Common myeloid progenitor, CD34-positive (primary cell): ENCODE measurements at regions of chr6 and their contacts with region 1.

Region 1: DNA sequence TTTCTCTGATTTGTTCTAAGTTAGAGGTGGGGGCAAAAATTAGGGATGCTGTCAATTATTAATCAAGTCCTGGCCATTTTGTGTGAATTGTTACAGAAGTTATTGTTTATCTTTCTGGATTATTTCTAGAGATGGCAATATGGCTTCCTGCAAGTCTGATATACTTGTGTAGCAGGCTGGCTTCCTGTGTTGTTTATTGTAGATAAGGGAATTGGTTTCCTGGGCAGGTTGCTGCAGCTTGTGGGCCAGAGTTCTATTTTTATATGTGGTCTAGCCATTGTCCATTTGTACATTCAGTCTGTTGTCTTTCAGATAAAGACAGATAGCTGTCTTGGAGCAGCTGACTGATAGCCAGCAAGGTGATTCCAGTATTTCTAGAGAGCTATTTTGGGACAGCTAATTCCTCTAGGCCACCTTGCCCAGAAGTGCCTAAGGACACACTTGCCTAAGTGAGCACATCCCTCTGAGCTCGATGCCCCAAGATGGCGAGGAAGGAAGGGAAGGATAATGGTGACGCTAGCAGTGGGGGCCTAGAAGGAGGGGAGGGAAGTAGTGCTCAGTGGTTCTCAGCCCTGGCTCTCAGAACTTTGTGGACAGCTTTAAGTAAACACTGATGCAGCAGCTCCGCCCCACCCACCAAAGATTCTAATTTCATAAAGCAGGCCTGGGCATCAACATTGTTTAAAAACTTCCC is 25.5 kb downstream of the DDO start:
- DNase-seq: peak; percentile 80 to 97 (median 92)
- H3K4me3 ChIP-seq: peak overlapping the region in 2 of 7 experiments; percentile 16 to 52
- H3K27ac ChIP-seq: no peak overlapping the region
- H3K4me1 ChIP-seq: peaks cover 14 to 17% (median 15%) of the 10 kb centered on the region in 4 experiments
- H3K27me3 ChIP-seq: no peaks in the 10 kb centered on the region

Region 2: DNA sequence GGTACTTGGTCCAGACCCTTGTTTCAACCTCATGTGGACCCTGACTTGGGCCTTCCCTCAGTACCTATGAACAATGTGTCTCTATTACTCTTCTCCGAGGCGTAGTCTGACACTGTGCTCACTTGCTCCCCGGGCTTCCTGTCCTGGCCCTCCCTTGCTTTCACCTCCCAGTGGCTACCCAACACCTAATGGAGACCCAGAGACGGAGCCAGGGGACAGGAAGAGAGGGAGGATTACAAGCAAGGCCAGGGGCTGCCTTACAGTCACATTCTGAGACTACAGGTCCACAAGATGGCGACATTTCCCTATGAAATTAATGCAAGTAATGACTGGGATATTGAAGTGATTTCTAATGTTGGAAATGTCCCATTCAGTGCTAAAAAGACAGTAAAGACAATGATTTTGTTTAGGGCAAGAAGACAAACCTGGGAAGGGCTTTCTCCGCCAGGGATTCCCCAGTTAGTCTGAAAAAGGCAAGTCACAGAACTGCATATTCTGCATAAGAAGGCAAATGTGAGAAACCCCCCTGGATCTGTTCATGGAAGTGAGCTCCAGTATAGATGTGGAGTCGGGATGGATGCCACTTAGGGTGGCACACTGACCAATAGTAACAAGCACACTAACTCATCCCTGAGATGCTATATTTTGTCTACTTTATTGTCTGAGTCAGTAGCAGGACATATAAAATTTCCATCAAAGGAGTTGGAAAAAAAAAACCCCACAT is 862.8 kb before region 1 on chr6:
- CTCF ChIA-PET with region 1: interaction called, 18 read pairs
- POLR2A ChIA-PET with region 1: no interaction called
- DNase-seq: peak; percentile 74 to 84 (median 78)
- H3K4me3 ChIP-seq: no peak overlapping the region
- H3K27ac ChIP-seq: no peak overlapping the region
- H3K4me1 ChIP-seq: no peaks in the 10 kb centered on the region
- H3K27me3 ChIP-seq: no peaks in the 10 kb centered on the region

Region 3: GRCh38 chr6:109705258-109705657 is 684.6 kb before region 1 on chr6:
- CTCF ChIA-PET with region 1: interaction called, 78 read pairs
- POLR2A ChIA-PET with region 1: no interaction called
- DNase-seq: peak; percentile 91 to 95 (median 92)
- H3K4me3 ChIP-seq: no peak overlapping the region
- H3K27ac ChIP-seq: no peak overlapping the region
- H3K4me1 ChIP-seq: peaks cover 0 to 16% (median 13%) of the 10 kb centered on the region in 4 experiments
- H3K27me3 ChIP-seq: no peaks in the 10 kb centered on the region

Region 4: DNA sequence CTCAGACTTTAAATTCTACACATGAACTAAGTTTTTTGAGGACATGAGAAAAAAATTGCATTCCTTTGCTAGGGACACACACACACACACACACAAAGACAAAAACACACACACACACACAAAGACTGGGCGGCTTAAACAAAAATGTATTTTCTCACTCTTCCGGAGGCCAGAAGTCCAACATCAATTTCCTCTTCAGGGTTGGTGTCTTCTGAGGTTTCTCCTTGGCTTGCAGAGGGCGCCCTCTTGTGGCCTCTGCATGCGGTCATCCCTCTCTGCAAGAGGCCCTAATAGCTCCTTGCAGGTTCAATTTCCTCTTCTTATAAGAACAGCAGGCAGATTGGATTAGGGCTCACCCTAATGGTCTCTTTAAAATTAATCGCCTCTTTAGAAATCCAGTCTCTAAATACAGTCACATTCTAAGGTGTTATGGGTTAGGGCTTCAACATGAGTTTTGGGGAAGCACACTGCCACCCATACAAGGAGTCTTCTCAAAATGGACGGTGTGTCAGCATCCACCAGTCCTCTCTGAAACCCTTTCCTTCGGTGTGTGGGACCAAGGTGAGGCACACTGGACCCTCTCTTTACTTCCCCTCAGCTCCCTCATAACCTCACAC is 350.4 kb before region 1 on chr6:
- CTCF ChIA-PET with region 1: interaction called, 68 read pairs
- POLR2A ChIA-PET with region 1: interaction called, 6 read pairs
- DNase-seq: peak; percentile 92 to 95 (median 94)
- H3K4me3 ChIP-seq: peak overlapping the region; percentile 36 to 88 (median 72)
- H3K27ac ChIP-seq: peak overlapping the region; percentile 59 to 74
- H3K4me1 ChIP-seq: peaks cover 0 to 38% (median 25%) of the 10 kb centered on the region in 4 experiments
- H3K27me3 ChIP-seq: no peaks in the 10 kb centered on the region

Region 5: DNA sequence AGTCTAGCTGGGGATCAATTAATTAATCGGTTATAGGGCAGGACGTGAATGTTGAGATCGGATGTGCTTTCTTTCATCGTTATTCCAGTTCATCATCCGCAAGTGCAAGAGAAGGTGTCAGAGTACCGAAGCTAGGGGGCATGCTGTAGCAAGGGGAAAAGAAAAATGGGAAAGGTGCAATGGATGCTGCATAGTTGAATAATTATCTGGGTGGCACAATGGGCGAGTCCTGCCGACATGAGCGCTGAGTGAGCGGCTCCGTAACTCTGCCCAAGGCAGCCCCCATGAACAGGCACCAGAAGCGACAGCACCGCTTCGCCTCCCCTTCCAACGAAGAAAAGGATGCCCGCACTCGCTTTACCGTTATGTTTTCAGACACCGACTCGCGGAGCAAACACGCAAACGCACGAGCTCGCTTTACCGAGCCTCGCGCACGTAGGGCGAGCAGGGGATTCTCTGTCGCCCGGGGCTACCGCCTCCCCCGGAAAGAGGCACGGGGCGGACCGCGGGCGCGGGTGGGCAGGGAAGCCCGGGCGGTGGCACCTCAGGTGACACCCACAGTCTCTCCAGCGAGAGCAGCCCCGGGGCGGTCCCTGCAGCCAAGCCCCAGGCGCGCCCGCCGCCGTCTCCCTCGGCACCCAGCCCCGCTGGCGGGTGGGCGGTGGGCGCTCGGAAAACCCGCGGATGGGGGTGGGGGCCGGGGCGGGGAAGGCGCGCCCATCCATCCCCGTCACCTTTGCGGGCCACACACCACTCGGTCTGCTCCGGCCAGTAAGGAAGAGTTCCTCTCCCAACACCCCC is 211.0 kb before region 1 on chr6:
- CTCF ChIA-PET with region 1: interaction called, 28 read pairs
- POLR2A ChIA-PET with region 1: interaction called, 6 read pairs
- DNase-seq: peak; percentile 75 to 83 (median 78)
- H3K4me3 ChIP-seq: peak overlapping the region; percentile 85 to 100 (median 97)
- H3K27ac ChIP-seq: peak overlapping the region; percentile 39 to 68
- H3K4me1 ChIP-seq: peaks cover 17 to 43% (median 29%) of the 10 kb centered on the region in 4 experiments
- H3K27me3 ChIP-seq: no peaks in the 10 kb centered on the region

Region 6: GRCh38 chr6:110400208-110400607 is 10.4 kb after region 1 on chr6:
- CTCF ChIA-PET with region 1: interaction called, 18 read pairs
- POLR2A ChIA-PET with region 1: no interaction called
- DNase-seq: no peak
- H3K4me3 ChIP-seq: peak overlapping the region in 4 of 7 experiments; percentile 30 to 68 (median 55)
- H3K27ac ChIP-seq: no peak overlapping the region
- H3K4me1 ChIP-seq: peaks cover 0 to 21% (median 12%) of the 10 kb centered on the region in 4 experiments
- H3K27me3 ChIP-seq: no peaks in the 10 kb centered on the region